ENCODE measurements at regions of chr18 and their contacts with region 1.

Region 1: GRCh38 chr18:23377669-23378301 is 75.3 kb upstream of the RIOK3 start:
- DNase-seq: no peak
- ATAC-seq: peak; percentile 68 to 75
- H3K4me3 ChIP-seq: no peak overlapping the region
- H3K27ac ChIP-seq: peak overlapping the region; percentile 42 to 64 (median 46)
- H3K4me1 ChIP-seq: peaks cover 7 to 9% of the 10 kb centered on the region in 2 donors
- H3K27me3 ChIP-seq: no peaks in the 10 kb centered on the region
- CTCF ChIP-seq: no peak
- POLR2A ChIP-seq: no peak

Region 2: DNA sequence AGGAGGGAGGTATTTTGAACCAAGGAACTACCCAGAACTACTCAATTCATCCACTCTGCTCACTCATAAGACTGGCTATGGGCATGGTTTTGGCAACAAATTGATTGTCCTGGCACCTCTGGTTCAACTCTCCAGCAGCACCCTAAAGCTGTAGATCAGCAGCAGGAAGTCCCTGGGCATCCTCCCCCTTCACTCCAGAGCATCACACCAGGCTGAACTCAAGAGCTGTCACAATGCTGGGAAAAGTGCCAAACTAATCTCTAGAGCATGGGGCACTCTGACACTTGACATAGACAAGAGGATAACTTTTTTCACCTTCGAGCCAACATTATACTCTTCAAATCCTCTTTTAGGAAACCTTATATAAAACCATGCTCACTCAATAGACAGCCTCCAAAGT is 598.8 kb before region 1 on chr18:
- in situ Hi-C with region 1: loop called in 1 of 4 experiments (anchors 25 kb)
- intact Hi-C with region 1: no loop called
- DNase-seq: no peak
- ATAC-seq: no peak
- H3K4me3 ChIP-seq: no peak overlapping the region
- H3K27ac ChIP-seq: no peak overlapping the region
- H3K4me1 ChIP-seq: no peaks in the 10 kb centered on the region
- H3K27me3 ChIP-seq: no peaks in the 10 kb centered on the region
- CTCF ChIP-seq: no peak
- POLR2A ChIP-seq: no peak

Region 3: GRCh38 chr18:23032030-23032582 is 345.7 kb before region 1 on chr18:
- in situ Hi-C with region 1: loop called in 1 of 4 experiments (anchors 25 kb)
- intact Hi-C with region 1: no loop called
- DNase-seq: no peak
- ATAC-seq: no peak
- H3K4me3 ChIP-seq: no peak overlapping the region
- H3K27ac ChIP-seq: no peak overlapping the region
- H3K4me1 ChIP-seq: no peaks in the 10 kb centered on the region
- H3K27me3 ChIP-seq: no peaks in the 10 kb centered on the region
- CTCF ChIP-seq: no peak
- POLR2A ChIP-seq: no peak

Region 4: DNA sequence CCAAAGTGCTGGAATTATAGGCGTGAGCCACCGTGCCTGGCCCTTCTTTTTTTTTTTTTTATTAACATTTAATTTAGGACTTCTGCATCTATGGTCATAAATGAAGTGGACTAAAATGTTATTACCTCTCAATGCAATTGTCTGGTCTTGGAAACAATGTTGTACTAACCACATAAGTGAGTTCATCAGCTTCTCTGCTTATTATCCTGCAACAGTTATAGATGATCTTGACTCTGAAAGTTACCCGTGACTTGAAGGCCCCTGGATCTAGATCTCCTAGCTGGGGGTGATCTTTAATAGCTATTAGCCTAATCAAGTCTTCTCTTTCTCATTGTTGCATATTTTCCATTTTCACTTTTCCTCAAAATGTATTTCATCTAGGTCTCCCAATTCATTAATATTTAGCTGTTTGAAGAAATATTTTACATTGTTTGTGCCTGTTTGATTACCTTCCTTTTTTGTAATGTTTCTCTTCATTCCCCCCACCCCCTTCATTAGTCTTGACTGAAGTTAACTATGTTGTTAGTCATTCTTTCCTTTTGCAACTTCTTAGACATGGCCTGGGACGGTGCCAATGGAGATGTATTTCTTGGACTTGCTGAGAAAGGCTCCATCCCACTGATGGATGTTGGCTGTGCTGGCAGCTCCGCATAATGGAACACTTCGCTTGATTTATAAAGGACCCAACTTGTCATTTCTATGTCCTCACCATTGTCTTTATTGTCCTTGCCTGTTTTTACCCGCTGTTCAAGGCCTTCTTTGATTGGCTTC is 66.2 kb before region 1 on chr18:
- in situ Hi-C with region 1: loop called in 1 of 4 experiments (anchors 10 kb)
- intact Hi-C with region 1: no loop called
- DNase-seq: no peak
- ATAC-seq: no peak
- H3K4me3 ChIP-seq: no peak overlapping the region
- H3K27ac ChIP-seq: no peak overlapping the region
- H3K4me1 ChIP-seq: no peaks in the 10 kb centered on the region
- H3K27me3 ChIP-seq: no peaks in the 10 kb centered on the region
- CTCF ChIP-seq: no peak
- POLR2A ChIP-seq: no peak

Measured in gastrocnemius medialis (tissue), 4 donors.